Activated CD4-positive, alpha-beta T cell treated with anti-CD3 and anti-CD28 coated beads for 36 hours (primary cell): ENCODE measurements at regions of chr16 and their contacts with region 1.

Region 1: GRCh38 chr16:1610276-1611017 is 1.4 kb downstream of the IFT140 start:
- DNase-seq: peak; percentile 95
- ATAC-seq: peak; percentile 67
- H3K4me3 Mint-ChIP-seq: peak overlapping the region; percentile 88
- H3K27ac Mint-ChIP-seq: peak overlapping the region; percentile 97
- H3K4me1 Mint-ChIP-seq: peaks cover 21% of the 10 kb centered on the region
- H3K27me3 Mint-ChIP-seq: peaks cover 2% of the 10 kb centered on the region

Region 2: GRCh38 chr16:527006-527753 is 1083.3 kb before region 1 on chr16 and contains the start of gene CAPN15:
- CTCF ChIA-PET with region 1: no interaction called
- POLR2A ChIA-PET with region 1: no interaction called
- intact Hi-C with region 1: loop called in 1 of 2 experiments (anchors 5 kb)
- DNase-seq: peak; percentile 91
- ATAC-seq: peak; percentile 71
- H3K4me3 Mint-ChIP-seq: peak within 1 kb of the TSS; percentile 94
- H3K27ac Mint-ChIP-seq: peak within 1 kb of the TSS; percentile 96
- H3K4me1 Mint-ChIP-seq: peaks cover 35% of the 10 kb centered on the region
- H3K27me3 Mint-ChIP-seq: no peaks in the 10 kb centered on the region
- total RNA-seq, gene CAPN15: 64.7 to 69.7 TPM

Region 3: GRCh38 chr16:1378804-1379303 is 231.6 kb before region 1 on chr16:
- CTCF ChIA-PET with region 1: interaction called, 3 read pairs
- POLR2A ChIA-PET with region 1: no interaction called
- intact Hi-C with region 1: loop called in 1 of 2 experiments (anchors 1 kb)
- DNase-seq: peak; percentile 87
- ATAC-seq: peak; percentile 74
- H3K4me3 Mint-ChIP-seq: peak overlapping the region; percentile 87
- H3K27ac Mint-ChIP-seq: peak overlapping the region; percentile 91
- H3K4me1 Mint-ChIP-seq: peaks cover 17% of the 10 kb centered on the region
- H3K27me3 Mint-ChIP-seq: no peaks in the 10 kb centered on the region

Region 4: GRCh38 chr16:1450218-1450617 is 160.2 kb before region 1 on chr16:
- CTCF ChIA-PET with region 1: no interaction called
- POLR2A ChIA-PET with region 1: no interaction called
- intact Hi-C with region 1: no loop called
- DNase-seq: no peak
- ATAC-seq: no peak
- H3K4me3 Mint-ChIP-seq: no peak overlapping the region
- H3K27ac Mint-ChIP-seq: no peak overlapping the region
- H3K4me1 Mint-ChIP-seq: no peaks in the 10 kb centered on the region
- H3K27me3 Mint-ChIP-seq: no peaks in the 10 kb centered on the region

Region 5: DNA sequence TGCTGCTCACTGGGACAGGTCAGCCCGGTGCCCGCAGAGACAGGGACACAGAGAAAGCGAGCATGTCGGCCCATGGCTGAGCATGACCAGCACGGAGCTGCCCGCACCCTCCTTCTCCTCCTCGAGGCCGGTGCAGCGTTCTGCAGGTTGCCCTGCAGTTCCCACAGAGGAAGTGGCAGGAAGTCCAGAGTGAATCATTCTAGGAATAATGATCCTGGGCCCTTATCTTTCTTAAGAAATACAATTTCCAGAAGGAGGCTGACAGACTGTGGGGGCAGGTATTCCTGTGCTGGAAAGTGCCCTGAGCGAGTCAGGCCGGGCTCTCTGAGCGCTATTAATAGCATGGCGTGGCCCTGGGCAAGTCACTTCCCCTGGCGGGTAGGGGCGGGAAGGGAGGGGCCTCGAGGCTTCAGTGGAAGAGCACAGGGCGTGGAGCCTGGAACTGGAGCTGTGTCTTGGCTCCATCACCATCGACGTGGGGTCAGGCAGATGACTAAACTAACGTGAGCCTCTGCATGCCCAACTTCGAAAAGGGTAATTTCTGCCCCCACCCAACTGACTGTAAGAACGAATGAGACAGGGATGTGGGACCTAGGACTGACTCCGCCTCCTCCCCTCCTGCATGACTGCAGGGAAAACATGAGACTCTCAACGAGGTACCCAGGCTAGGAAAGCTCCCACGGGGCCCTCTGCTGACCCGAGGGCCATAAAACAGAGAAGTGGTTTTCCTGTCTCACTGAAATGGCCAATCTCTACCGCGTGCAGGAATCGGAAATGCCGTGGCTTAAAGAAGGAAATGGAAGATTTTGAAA is 67.2 kb before region 1 on chr16:
- CTCF ChIA-PET with region 1: no interaction called
- POLR2A ChIA-PET with region 1: no interaction called
- intact Hi-C with region 1: loop called (anchors 1 to 5 kb)
- DNase-seq: peak; percentile 84
- ATAC-seq: peak; percentile 85
- H3K4me3 Mint-ChIP-seq: peak overlapping the region; percentile 71
- H3K27ac Mint-ChIP-seq: peak overlapping the region; percentile 99
- H3K4me1 Mint-ChIP-seq: peaks cover 78% of the 10 kb centered on the region
- H3K27me3 Mint-ChIP-seq: no peaks in the 10 kb centered on the region

Region 6: DNA sequence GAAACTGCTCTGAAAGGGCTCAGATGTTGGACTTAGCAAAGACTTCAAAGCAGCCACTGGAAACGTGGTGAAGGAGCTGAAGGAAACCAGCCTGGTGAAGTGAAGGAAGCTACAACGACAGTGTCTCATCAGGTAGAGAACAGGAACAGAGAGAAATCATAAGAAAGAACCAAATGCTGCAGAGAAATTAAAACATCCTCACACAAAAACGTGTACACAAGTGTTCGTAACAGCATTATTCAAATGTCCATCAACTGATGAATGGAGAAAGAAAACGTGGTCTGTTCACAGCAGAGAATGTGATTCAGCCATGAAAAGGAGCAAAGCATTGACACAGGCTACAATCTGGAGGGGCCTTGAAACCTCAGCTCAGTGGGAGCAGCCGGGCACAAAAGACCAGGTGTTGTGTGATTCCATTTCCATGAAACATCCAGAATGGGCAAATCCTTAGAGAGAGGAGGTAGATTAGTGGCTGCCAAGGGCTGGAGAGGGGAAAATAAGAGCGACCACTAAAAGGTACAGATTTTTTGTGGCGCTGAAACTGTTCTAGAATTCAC is 25.4 kb before region 1 on chr16:
- CTCF ChIA-PET with region 1: no interaction called
- POLR2A ChIA-PET with region 1: no interaction called
- intact Hi-C with region 1: no loop called
- DNase-seq: no peak
- ATAC-seq: no peak
- H3K4me3 Mint-ChIP-seq: no peak overlapping the region
- H3K27ac Mint-ChIP-seq: no peak overlapping the region
- H3K4me1 Mint-ChIP-seq: no peaks in the 10 kb centered on the region
- H3K27me3 Mint-ChIP-seq: no peaks in the 10 kb centered on the region

Region 7: DNA sequence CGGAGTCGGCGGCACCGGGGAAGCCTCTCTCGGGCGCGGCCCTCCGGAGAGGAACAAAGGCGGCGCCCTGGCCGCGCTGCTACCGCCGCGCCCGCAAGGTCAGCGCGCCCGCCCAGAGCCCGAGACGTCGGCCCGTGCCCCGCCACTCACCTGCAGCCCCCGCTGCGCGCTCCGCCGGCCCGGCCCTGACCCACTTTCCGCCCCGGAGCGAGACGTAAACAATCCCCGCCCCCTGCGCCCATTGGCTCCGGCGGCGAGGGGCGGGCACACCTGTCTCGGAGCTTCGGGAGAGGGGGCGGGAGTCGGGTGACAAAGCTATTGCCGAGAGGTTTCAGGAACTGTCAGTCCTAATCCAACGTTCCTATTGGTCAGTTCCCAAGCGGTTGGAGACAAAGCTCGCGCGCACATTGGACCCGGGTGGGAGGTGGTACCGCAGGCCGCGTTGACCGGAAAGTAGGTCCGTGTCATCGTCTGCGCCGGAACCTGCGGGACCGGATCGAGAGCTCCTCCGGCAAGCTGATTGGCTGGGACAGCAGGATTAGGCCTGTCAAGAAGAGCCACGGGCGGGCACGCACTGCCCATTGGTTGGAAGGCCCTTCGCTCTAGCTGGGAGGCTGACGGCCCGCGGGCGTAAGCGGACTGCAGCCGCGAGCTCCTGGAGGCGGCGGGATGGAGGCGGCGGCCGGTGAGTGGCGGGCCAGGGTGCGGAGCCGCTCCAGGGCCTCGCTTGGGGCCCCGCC is 172.1 kb after region 1 on chr16 and contains the starts of genes NUBP2 and SPSB3:
- CTCF ChIA-PET with region 1: no interaction called
- POLR2A ChIA-PET with region 1: no interaction called
- intact Hi-C with region 1: loop called in 1 of 2 experiments (anchors 1 kb)
- DNase-seq: peak; percentile 99
- ATAC-seq: peak; percentile 93
- H3K4me3 Mint-ChIP-seq: peak within 1 kb of the TSS; percentile 94
- H3K27ac Mint-ChIP-seq: peak within 1 kb of the TSS; percentile 85
- H3K4me1 Mint-ChIP-seq: peaks cover 26% of the 10 kb centered on the region
- H3K27me3 Mint-ChIP-seq: no peaks in the 10 kb centered on the region
- total RNA-seq, gene NUBP2: 34.4 to 42.4 TPM
- total RNA-seq, gene SPSB3: 12.5 to 13.6 TPM

Region 8: GRCh38 chr16:1991948-1992703 is 381.7 kb after region 1 on chr16:
- CTCF ChIA-PET with region 1: no interaction called
- POLR2A ChIA-PET with region 1: no interaction called
- intact Hi-C with region 1: loop called in 1 of 2 experiments (anchors 5 kb)
- DNase-seq: peak; percentile 100
- ATAC-seq: peak; percentile 70
- H3K4me3 Mint-ChIP-seq: peak overlapping the region; percentile 56
- H3K27ac Mint-ChIP-seq: no peak overlapping the region
- H3K4me1 Mint-ChIP-seq: peaks cover 27% of the 10 kb centered on the region
- H3K27me3 Mint-ChIP-seq: peaks cover 15% of the 10 kb centered on the region

Region 9: DNA sequence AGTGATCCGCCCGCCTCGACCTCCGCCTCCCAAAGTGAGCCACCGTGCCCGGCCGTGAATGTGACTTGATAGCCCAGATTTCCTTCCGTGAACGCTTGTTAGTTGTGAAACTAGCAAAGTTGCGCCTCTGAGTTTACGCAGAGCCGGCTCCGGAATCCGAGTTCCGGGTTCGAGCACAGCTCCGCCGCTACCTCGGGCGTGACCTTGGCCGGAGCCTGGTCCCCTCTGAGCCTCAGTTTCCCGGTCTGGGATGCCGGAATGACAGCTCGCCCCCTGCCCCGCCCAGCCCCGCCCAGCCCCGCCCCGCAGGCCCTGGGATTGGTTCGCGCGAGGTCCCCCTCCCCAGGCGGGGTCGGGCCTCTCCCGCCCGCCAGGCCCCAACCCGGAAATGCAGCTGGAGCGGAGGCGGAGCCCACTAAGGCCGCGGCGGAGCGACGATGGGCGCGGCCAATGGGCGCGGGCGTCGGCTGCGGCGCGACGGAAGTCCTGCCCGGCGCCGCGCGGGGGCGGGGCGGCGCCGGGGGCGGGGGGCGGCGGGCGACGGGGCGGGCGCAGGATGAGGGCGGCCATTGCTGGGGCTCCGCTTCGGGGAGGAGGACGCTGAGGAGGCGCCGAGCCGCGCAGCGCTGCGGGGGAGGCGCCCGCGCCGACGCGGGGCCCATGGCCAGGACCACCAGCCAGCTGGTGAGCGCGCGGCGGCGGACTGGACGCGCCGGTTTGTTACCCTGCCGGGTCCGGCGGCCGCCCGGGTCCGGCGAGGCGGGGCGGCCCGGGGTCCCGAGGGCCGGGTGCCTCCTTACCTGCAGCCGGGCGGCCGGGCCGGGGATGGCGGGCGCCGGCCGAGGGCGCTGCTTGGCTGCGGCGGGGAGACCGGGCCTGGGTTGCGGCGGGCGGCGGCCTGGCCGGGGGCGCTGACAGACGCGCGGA is 927.3 kb after region 1 on chr16 and contains the start of gene PDPK1:
- CTCF ChIA-PET with region 1: no interaction called
- POLR2A ChIA-PET with region 1: no interaction called
- intact Hi-C with region 1: loop called in 1 of 2 experiments (anchors 5 kb)
- DNase-seq: peak; percentile 97
- ATAC-seq: peak; percentile 93
- H3K4me3 Mint-ChIP-seq: peak within 1 kb of the TSS; percentile 83
- H3K27ac Mint-ChIP-seq: peak within 1 kb of the TSS; percentile 90
- H3K4me1 Mint-ChIP-seq: peaks cover 38% of the 10 kb centered on the region
- H3K27me3 Mint-ChIP-seq: no peaks in the 10 kb centered on the region
- total RNA-seq, gene PDPK1: 30.4 to 34.5 TPM